ENCODE measurements at regions of chr2 and their contacts with region 1.

Region 1: DNA sequence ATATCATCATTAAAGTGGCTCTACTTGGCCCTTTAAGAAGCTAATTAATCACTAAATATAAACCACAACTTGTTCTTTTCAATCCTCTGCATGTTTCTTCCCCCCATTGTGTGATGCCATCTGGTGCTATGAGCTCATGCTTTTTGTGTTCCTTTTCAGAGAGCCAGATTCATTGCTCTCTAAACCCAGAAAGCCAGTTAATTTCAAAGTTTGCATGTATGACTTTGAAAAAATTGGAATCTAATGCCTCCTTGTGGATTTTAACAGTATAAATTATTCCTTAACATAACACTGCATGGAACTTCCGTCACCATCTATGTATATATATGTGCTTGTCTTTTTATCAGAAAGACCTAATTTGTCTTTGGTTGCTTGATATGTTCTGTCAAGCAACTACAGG is 31.1 kb downstream of the TMEM178A start:
- DNase-seq: no peak
- H3K4me3 ChIP-seq: peak overlapping the region; percentile 5
- H3K27ac ChIP-seq: peak overlapping the region; percentile 76
- H3K4me1 ChIP-seq: peaks cover 31% of the 10 kb centered on the region
- H3K27me3 ChIP-seq: no peaks in the 10 kb centered on the region
- CTCF ChIP-seq: peak; percentile 65

Region 2: DNA sequence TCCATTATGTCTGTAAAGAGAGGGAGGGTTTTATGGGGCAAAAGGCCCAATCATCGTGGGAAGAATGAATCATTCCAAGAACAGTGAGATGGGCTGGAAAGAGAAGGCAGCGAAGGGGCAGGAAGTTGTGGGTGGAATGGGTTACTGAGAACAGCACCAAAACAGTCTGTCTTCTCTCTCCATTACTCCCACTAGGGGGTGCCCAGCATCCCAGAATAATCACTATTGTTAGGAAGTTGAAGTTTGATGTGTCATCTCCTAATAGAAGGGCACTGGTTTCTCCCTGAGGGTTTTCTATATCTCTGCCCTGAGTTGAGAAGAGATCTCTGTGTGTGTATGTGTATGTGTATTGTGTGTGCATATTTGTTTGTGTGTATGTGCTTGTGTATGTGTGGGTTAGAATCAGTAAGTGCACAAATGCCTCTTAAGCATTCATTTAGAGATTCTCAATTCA is 183.2 kb before region 1 on chr2:
- intact Hi-C with region 1: loop called (anchors 10 kb)
- DNase-seq: peak; percentile 24
- H3K4me3 ChIP-seq: no peak overlapping the region
- H3K27ac ChIP-seq: peak overlapping the region; percentile 85
- H3K4me1 ChIP-seq: peaks cover 100% of the 10 kb centered on the region
- H3K27me3 ChIP-seq: no peaks in the 10 kb centered on the region
- CTCF ChIP-seq: peak; percentile 68

Region 3: GRCh38 chr2:39593439-39594393 is 103.1 kb before region 1 on chr2:
- intact Hi-C with region 1: loop called (anchors 5 kb)
- DNase-seq: no peak
- H3K4me3 ChIP-seq: no peak overlapping the region
- H3K27ac ChIP-seq: no peak overlapping the region
- H3K4me1 ChIP-seq: peaks cover 12% of the 10 kb centered on the region
- H3K27me3 ChIP-seq: no peaks in the 10 kb centered on the region
- CTCF ChIP-seq: peak; percentile 77

Region 4: DNA sequence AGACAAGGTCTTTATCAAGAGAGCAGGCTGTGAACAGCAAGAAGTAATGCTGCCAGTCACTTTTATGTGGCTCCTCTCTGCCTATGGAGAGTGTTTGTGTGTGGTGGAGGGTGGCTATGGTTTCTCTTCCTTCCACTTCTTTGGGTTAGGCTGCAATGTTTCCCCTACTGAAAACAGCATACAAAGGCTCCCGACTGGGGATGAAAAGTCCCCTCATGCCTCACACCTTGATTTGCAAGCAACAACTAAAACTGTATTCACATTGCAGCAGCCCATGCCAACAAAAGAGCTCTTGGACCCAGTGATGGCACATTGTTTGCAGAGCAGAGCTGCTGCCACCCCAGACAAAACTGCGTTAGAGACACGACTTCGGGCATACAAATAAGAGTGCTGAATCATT is 453.4 kb after region 1 on chr2:
- intact Hi-C with region 1: no loop called
- DNase-seq: no peak
- H3K4me3 ChIP-seq: no peak overlapping the region
- H3K27ac ChIP-seq: peak overlapping the region; percentile 14
- H3K4me1 ChIP-seq: peaks cover 45% of the 10 kb centered on the region
- H3K27me3 ChIP-seq: no peaks in the 10 kb centered on the region
- CTCF ChIP-seq: no peak

Measured in left ventricle myocardium inferior (tissue), 1 donor.